AG04450 (cell line): ENCODE measurements at regions of chrX and their contacts with region 1.

Region 1: GRCh38 chrX:104310090-104310489 is 55.4 kb upstream of the ESX1 start:
- DNase-seq: no peak
- H3K4me3 ChIP-seq: peak overlapping the region; percentile 39; the same call in 1 of the 2 replicates
- H3K27ac ChIP-seq: no peak overlapping the region
- H3K27me3 ChIP-seq: no peaks in the 10 kb centered on the region
- CTCF ChIP-seq: peak; percentile 43

Region 2: DNA sequence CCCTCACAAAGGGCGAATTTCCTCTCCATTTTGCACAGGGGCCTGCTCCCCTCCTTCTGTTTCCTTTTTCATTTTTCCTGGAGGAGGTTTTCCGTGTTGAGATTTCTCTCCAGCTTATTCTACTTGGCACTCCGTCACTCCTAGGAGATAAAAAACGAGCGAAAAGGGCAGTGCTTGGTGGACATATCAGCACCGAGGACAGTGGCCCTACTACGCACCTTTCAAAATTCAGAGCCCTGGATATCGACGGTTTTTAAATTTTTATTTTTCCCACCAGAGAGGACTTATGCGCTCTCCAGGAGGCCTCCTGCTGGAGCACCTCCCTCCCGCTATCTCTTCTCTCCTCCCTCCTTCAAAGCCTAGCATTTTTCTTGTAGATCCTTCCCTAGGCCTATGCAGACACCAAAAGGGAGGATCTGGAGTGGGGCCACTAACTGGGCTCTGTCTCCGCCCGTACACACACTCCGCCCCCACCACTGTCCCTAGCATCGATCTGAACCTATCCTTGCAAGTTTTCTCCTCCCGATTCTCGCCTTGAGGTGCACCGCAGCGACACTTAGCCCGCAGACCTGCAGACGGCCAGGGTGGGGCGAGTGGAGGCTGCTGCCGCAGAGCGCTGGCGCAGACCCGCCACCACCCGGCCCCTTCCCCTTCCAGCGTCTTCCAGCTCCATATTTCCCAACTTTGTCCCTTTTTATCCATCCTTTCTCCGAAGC is 962.2 kb before region 1 on chrX:
- CTCF ChIA-PET with region 1: no interaction called
- POLR2A ChIA-PET with region 1: no interaction called
- DNase-seq: no peak
- H3K4me3 ChIP-seq: no peak overlapping the region
- H3K27ac ChIP-seq: no peak overlapping the region
- H3K27me3 ChIP-seq: no peaks in the 10 kb centered on the region
- CTCF ChIP-seq: no peak

Region 3: DNA sequence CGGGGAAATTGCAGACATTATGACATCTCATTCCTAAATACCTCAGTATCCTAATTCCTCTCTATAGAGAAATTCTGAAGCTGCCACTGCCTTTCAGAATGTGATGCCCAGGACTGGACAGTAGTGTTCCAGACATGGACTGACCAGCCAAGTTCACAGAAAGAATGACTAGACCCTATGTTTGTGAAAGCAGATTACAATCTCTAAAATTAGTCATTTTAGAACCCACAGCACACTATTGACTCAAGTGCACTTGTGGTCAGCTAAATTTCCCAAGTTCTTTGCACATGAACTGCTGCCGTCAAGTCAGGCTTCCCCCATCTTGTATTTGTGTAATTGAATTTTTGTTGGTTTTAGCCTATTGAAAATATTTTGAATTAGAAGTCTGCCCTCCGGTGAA is 25.7 kb after region 1 on chrX:
- CTCF ChIA-PET with region 1: interaction called, 13 read pairs
- POLR2A ChIA-PET with region 1: no interaction called
- DNase-seq: no peak
- H3K4me3 ChIP-seq: no peak overlapping the region
- H3K27ac ChIP-seq: no peak overlapping the region
- H3K27me3 ChIP-seq: no peaks in the 10 kb centered on the region
- CTCF ChIP-seq: no peak

Region 4: DNA sequence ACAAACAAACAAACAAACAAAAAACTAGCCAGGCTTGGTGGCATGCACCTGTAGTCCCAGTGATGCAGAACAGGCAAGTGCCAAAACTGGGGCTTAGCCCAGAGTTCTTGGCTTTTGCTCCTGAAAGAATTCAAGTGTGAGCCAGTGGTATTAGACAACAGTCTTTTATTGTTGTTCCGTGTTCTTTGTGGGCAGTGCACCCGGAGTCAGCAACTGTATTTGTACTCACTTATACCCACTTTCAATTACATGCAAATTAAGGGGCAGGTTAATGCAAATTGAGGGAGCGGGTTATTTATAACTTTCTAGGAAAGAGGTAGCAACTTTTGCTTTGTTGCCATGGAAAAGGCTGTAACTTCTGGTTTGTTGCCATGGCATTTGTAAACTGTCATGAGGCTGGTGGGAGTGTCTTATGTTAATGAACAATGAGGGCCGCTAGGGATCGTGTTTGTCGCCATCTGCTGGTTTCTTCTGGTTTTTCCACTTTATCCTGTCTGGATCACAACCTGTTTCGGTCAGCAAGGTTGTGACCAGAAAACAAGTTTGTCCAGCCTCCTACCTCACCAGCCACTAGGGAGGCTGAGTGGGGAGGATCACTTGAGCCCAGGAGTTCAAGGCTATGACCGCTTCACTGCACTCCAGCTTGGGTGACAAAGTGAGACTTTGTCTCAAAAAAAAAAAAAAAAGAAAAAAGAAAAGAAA is 33.5 kb after region 1 on chrX:
- CTCF ChIA-PET with region 1: interaction called, 34 read pairs
- POLR2A ChIA-PET with region 1: no interaction called
- DNase-seq: no peak
- H3K4me3 ChIP-seq: no peak overlapping the region
- H3K27ac ChIP-seq: no peak overlapping the region
- H3K27me3 ChIP-seq: no peaks in the 10 kb centered on the region
- CTCF ChIP-seq: peak; percentile 60

Region 5: DNA sequence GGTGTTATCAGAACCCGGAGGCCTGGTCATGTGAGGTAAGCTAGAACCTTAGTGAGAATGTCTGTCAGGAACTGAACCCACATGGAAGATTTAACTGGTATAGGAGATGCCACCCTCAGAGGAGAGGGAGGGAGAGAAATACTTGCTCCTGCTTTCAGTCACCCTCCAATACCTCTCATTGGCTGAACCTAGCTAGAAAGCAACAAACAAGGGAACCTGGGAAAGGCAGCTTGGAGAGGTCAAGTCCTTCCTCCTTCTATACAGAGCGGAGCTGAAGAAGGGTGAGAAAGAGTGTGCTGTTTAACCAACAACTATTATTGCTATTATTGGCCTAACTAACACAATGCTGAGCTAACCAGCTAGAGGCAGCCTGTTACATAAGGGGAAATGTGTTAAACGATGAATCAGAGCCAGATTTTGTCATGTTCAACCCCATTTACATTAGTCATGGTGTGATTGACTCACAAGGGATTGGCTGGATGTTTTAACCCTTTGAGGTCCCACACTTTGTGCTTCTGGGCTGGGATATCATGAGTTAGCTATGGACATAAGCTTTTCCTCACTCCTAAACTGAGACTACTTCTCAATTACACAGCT is 41.2 kb after region 1 on chrX:
- CTCF ChIA-PET with region 1: interaction called, 15 read pairs
- POLR2A ChIA-PET with region 1: no interaction called
- DNase-seq: no peak
- H3K4me3 ChIP-seq: no peak overlapping the region
- H3K27ac ChIP-seq: no peak overlapping the region
- H3K27me3 ChIP-seq: no peaks in the 10 kb centered on the region
- CTCF ChIP-seq: no peak